HepG2 (cell line): ENCODE measurements at regions of chr4 and their contacts with region 1.

Region 1: DNA sequence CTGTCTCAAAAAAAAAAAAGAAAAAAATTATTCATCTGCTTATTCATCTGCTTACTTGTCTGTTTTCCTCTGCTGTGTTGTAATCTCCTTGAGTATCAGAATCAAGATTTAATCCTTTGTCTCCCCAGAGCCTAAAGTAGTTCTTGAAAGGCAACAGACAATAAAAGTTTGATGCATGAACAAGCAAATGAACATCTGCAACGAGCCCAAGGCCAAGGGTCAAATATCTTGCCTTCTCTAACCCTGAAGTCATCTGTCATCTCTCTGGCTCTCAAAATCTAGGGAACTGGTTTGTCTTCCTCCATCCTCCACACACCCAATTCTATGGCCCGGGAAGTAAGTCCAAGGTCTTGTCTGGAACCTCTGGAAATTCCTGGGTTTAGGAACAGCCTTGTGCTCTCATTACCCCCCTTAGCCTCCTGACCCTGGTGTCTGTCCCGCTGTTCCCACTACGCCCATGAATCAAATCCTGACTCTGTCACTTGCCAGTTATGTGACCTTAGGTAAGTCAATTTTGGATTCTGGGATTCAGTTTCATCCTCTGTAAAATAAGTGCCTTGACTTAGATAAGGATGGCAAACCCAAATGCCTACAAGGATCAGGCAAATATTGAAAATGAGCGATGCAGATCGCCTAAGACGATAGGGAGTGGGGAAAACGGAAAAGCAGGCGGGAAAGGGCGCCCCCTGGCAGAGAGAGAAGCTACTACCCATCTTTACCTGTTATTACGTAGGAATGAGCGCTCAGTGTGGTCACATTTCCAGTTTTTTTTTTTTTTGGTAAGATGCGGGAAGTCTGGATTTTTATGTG is 102.7 kb upstream of the DHX15 start:
- DNase-seq: peak; percentile 17
- ATAC-seq: peak; percentile 74
- H3K4me3 ChIP-seq: no peak overlapping the region
- H3K27ac ChIP-seq: no peak overlapping the region
- H3K4me1 ChIP-seq: no peaks in the 10 kb centered on the region
- H3K27me3 ChIP-seq: peaks cover 0 to 13% of the 10 kb centered on the region in 2 experiments; a peak in 2 of 5 replicates
- CTCF ChIP-seq: peak; percentile 73
- EP300 ChIP-seq: no peak
- POLR2A ChIP-seq: no peak
- RAD21 ChIP-seq: no peak

Region 2: DNA sequence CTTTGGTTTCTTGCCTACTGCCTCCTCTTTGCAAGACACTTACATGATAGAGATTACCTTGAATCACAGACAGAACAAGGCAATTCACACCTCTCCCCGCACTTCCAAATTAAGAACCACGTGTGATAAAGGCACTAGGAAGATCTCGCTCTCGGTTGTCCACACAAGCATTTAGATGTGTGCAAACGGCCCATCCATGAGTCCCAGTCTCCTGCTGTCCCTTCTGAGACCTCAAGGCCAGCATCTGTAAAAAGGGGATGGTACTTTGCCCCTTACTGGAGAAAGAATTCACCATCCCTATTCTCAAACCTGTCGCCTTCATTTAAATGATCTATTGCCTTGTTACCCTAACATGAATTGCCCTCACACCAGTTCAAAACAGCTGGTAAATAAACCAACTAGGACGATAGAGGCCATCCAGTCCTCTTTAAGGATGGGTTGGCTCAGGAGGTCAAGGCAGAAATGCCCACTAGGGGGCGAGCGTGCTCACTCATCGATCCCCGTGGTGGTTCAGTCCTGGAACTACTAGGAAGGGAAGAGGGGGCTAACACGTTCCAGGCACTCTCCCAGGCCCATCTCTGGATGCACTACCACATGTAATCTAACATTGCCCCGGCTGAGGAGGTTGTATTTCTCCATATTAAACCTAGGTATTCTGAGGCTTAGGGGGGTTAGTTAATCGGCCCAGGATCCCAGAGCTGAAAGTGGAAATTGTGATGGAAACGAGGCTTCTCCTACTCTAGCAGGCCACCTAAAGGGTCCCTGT is 198.5 kb before region 1 on chr4:
- CTCF ChIA-PET with region 1: interaction called, 17 read pairs
- POLR2A ChIA-PET with region 1: no interaction called
- in situ Hi-C with region 1: loop called (anchors 5 kb)
- intact Hi-C with region 1: loop called (anchors 1 kb)
- DNase-seq: peak; percentile 44
- ATAC-seq: peak; percentile 99
- H3K4me3 ChIP-seq: no peak overlapping the region
- H3K27ac ChIP-seq: no peak overlapping the region
- H3K4me1 ChIP-seq: 0 out of 2 replicates have a peak, but pooled peaks cover 6% of the 10 kb centered on the region
- H3K27me3 ChIP-seq: 0 out of 5 replicates have a peak, but pooled peaks cover 0 to 6% of the 10 kb centered on the region in 2 experiments
- CTCF ChIP-seq: peak; percentile 89
- EP300 ChIP-seq: no peak
- POLR2A ChIP-seq: no peak
- RAD21 ChIP-seq: peak; percentile 73